Heart left ventricle (tissue), 16 donors: ENCODE measurements at regions of chr21 and their contacts with region 1.

Region 1: DNA sequence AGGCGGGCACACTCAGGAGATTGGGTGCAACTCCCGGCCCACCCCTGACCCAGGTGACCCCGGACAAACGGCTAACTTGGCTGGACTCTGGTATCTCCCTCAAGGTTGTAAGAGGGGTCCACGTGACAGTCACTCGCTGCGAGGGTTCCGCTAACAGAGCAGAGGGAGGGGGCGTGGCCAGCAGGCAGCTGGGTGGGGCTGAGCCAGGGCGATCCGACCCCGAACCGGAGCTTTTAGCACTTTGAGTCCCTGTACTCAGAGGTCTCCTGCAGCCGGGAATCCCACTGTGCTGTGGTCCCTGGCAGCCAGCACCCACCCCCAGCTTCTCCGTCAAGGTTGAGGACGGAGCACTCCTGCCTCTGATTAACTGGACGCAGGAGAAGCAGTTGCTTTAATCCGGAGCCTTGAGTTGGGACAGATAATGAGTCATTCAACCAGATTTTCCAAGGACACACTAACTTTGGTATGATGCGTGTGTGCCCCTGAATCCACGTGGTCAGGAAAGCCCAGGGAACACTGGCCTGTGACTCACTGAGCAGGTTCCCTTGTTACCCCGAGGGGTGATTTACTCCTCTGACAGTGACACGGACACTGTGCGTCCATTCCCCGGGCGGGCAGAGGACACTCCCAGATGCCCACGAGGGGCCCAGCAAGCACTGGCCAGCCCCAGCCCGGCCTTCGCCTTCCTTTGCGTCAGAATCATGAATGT is 16.8 kb downstream of the TRPM2 start:
- DNase-seq: peak in 1 of 5 donors; percentile 4
- ATAC-seq: peak in 2 of 4 donors; percentile 30 to 31
- H3K4me3 ChIP-seq: peak overlapping the region in 2 of 12 donors; percentile 7 to 16
- H3K27ac ChIP-seq: no peak overlapping the region
- H3K4me1 ChIP-seq: peaks cover 0 to 10% (median 0%) of the 10 kb centered on the region in 12 donors
- H3K27me3 ChIP-seq: peaks cover 0 to 35% (median 15%) of the 10 kb centered on the region in 9 donors
- CTCF ChIP-seq: no peak
- POLR2A ChIP-seq: no peak

Region 2: GRCh38 chr21:44024887-44025362 is 345.3 kb before region 1 on chr21:
- intact Hi-C with region 1: no loop called
- DNase-seq: peak; percentile 50 to 76 (median 70)
- ATAC-seq: peak; percentile 64 to 87 (median 76)
- H3K4me3 ChIP-seq: peak overlapping the region in 1 of 12 donors; percentile 4
- H3K27ac ChIP-seq: peak overlapping the region in 10 of 12 donors; percentile 16 to 76 (median 42)
- H3K4me1 ChIP-seq: peaks cover 0 to 62% (median 42%) of the 10 kb centered on the region in 12 donors
- H3K27me3 ChIP-seq: no peaks in the 10 kb centered on the region
- CTCF ChIP-seq: no peak
- POLR2A ChIP-seq: no peak

Region 3: DNA sequence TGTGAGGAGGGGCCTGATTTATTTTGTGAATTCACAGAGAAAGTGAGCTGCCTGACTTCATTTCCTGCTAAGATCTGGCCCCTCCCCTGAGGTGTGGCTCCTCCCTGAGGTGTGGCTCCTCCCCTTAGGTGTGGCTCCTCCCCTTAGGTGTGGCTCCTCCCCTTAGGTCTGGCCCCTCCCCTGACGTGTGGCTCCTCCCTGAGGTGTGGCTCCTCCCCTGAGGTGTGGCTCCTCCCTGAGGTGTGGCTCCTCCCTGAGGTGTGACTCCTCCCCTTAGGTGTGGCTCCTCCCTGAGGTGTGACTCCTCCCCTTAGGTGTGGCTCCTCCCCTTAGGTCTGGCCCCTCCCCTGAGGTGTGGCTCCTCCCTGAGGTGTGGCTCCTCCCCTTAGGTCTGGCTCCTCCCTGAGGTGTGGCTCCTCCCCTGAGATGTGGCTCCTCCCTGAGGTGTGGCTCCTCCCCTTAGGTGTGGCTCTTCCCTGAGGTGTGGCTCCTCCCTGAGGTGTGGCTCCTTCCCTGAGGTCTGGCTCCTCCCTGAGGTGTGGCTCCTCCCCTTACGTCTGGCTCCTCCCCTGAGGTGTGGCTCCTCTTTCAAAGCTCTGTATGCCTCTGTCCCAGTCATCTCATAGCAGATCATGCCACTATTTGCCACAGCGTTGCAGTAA is 58.2 kb after region 1 on chr21:
- intact Hi-C with region 1: loop called in 1 of 10 experiments (anchors 10 kb)
- DNase-seq: peak in 1 of 5 donors; percentile 20
- ATAC-seq: no peak
- H3K4me3 ChIP-seq: no peak overlapping the region
- H3K27ac ChIP-seq: no peak overlapping the region
- H3K4me1 ChIP-seq: no peaks in the 10 kb centered on the region
- H3K27me3 ChIP-seq: peaks cover 0 to 11% (median 0%) of the 10 kb centered on the region in 9 donors
- CTCF ChIP-seq: no peak
- POLR2A ChIP-seq: no peak

Region 4: DNA sequence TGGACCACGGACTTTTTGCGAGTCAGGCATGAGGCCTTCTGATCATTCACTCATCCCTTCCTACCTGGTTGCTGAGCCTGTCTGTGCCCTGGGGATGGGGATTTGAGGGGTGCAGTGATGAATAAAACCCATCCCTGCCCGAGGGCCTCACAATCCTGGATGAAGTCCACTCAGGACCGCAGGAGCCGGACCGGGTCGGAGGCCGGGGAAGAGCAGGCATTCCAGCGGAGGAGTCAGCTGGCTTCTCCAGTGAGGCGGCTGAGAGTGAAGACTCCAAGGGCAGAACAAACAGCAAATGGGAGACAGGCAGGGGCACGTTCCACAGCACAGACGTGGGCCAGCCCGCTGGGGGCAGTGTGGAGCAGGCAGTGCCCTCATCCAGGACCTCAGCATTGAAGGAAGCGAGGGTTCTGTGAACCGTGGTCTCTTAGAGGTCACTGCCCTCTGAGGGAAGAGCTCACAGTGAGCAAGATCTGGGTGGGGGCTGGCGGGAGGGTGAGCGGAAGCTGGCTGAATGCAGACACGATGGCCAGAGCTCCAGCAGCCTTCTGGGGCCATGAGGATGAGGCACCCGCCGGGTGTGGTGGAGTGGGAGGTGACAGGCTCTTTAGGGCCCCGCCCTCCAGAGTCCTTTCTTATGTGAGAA is 74.2 kb after region 1 on chr21:
- intact Hi-C with region 1: loop called in 1 of 10 experiments (anchors 10 kb)
- DNase-seq: peak in 1 of 5 donors; percentile 23
- ATAC-seq: no peak
- H3K4me3 ChIP-seq: no peak overlapping the region
- H3K27ac ChIP-seq: no peak overlapping the region
- H3K4me1 ChIP-seq: peaks cover 0 to 1% (median 0%) of the 10 kb centered on the region in 12 donors
- H3K27me3 ChIP-seq: peaks cover 0 to 13% (median 0%) of the 10 kb centered on the region in 9 donors
- CTCF ChIP-seq: no peak
- POLR2A ChIP-seq: no peak